Sciatic nerve (tissue), 2 donors: ENCODE measurements at regions of chr15 and their contacts with region 1.

Region 1: GRCh38 chr15:56454836-56455235 is 10.1 kb downstream of the MNS1 start:
- DNase-seq: no peak
- ATAC-seq: no peak

Region 2: DNA sequence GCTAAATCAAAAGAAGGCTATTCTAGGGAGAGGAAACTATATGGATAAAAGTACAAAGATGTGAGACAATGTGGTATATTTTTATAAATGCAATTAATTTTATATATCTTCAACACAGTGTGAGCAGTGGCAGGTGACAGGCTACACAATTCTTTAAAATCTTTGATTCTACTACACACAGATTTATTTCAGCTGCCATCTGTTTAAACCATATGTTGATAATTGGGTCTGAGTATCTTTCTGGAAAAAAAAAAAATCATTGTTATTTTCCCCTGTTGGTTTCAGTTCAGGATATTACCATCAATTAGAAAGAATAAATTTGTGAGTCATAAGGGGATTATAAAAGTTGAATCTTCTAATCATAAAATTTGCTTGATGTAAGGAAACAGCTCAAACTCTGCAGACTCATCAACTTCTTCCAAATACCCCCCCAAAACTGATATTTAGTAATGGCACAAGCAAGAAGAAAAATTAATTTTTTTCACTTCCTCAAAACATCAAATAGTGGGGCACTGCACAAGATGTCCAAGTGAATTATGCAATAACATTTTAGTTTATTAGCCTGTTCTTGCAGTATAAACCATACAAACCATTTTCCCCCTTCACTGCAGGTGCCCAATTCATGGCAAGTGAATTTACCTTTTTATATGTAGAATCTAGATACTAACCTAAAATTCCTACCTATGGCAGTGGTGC is 1034.5 kb before region 1 on chr15:
- intact Hi-C with region 1: loop called (anchors 5 kb)
- DNase-seq: no peak
- ATAC-seq: no peak